CD4-positive, alpha-beta T cell (primary cell): ENCODE measurements at regions of chr4 and their contacts with region 1.

Region 1: DNA sequence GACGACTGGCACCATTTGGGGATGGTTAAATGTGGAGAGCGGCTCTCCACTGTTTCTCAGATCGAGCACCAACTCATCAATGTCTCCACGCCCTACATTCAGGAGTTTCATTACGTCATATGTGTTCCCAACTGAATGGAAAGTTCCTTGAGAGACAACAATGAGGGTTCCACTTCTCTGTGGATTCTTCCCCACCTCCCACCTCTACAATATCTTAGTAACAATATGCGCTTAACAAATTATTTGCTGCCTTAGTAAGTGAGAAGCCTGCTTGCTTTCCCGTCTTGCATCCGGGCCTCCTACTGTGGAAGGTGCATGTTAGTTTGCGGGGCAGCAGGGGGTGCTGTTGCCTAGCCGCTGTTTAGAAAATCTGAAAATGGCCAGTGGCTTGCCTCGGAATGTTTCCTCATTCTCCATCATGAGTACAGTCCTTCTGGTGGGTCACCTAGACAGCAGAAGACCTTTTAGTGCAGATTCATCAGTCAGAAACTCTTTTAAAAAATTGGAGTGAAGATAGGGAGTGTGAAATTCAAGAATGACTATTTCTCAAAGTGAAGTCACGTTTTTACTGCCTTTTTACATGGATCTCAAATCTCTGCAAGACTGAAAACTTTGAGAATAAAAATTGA is 55.7 kb downstream of the PHOX2B start:
- DNase-seq: peak in 6 of 14 experiments; percentile 2 to 41 (median 14)
- ATAC-seq: no peak
- H3K4me3 ChIP-seq: no peak overlapping the region
- H3K4me3 Mint-ChIP-seq: no peak overlapping the region
- H3K27ac ChIP-seq: no peak overlapping the region
- H3K27ac Mint-ChIP-seq: no peak overlapping the region
- H3K4me1 ChIP-seq: no peaks in the 10 kb centered on the region
- H3K4me1 Mint-ChIP-seq: no peaks in the 10 kb centered on the region
- H3K27me3 ChIP-seq: no peaks in the 10 kb centered on the region
- H3K27me3 Mint-ChIP-seq: peaks cover 16% of the 10 kb centered on the region
- CTCF ChIP-seq: no peak

Region 2: DNA sequence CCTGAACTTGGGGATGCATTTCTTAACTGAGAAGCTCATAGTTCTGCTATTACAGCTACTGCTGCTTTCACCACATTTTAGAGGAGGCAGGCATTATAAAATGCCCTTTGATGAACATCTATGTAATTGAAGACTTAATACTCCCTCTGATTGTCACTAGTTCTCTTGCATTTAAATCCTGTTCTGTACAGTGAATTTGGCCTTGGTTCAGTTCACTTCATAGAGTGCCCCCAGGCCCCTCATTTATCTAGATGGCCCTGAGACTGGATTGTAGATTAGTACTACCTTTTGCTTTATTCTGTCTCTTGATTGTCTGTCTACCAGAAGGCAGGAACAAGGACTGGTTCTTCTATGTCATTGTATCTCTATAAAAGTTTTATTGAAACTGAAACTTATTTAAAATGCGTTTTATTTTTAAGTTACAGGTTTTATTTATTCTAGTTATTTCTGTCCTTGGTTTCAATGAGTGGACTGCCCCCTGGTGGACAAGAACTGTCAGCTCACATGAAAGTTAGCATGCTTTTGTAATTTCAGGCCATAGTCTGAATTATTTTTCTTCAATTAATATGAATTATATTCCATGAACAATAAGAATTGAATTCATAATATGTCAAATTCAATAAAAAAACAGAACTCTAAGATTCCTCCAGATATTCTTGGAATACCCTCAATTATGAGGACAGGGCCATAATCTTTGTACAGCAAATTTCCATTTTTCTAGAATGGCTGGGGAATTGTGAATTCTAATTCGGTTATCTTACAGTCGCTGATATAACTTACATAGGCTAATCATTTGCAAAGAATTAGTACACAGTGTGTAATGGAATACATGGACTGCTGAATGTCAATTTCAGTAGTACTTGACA is 195.2 kb after region 1 on chr4:
- CTCF ChIA-PET with region 1: no interaction called
- POLR2A ChIA-PET with region 1: no interaction called
- intact Hi-C with region 1: loop called (anchors 5 kb)
- DNase-seq: peak in 7 of 14 experiments; percentile 15 to 65 (median 35)
- ATAC-seq: no peak
- H3K4me3 ChIP-seq: no peak overlapping the region
- H3K4me3 Mint-ChIP-seq: no peak overlapping the region
- H3K27ac ChIP-seq: no peak overlapping the region
- H3K27ac Mint-ChIP-seq: no peak overlapping the region
- H3K4me1 ChIP-seq: peaks cover 1% of the 10 kb centered on the region
- H3K4me1 Mint-ChIP-seq: peaks cover 2% of the 10 kb centered on the region
- H3K27me3 ChIP-seq: peaks cover 6 to 31% of the 10 kb centered on the region in 2 experiments
- H3K27me3 Mint-ChIP-seq: peaks cover 77% of the 10 kb centered on the region
- CTCF ChIP-seq: peak; percentile 90

Region 3: DNA sequence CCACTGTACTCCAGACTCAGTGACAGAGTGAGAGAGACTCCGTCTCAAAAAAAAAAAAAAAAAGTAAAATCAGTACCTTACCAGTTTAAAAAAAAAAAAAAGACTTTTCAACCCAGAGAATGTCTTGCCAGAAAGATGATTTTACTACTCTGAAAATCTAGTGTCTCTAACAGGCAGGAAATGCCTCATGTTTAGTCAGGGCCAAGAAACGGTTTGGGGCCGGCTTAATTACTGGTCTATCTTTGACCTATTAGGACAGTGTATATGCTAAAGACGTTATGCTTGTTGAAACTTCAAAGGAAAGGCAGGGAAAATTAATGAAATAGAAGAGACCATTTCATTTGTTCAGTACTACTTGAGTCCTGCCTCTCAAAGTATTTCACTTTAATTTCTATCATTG is 449.8 kb after region 1 on chr4:
- CTCF ChIA-PET with region 1: no interaction called
- POLR2A ChIA-PET with region 1: no interaction called
- intact Hi-C with region 1: no loop called
- DNase-seq: no peak
- ATAC-seq: no peak
- H3K4me3 ChIP-seq: no peak overlapping the region
- H3K4me3 Mint-ChIP-seq: no peak overlapping the region
- H3K27ac ChIP-seq: no peak overlapping the region
- H3K27ac Mint-ChIP-seq: no peak overlapping the region
- H3K4me1 ChIP-seq: no peaks in the 10 kb centered on the region
- H3K4me1 Mint-ChIP-seq: no peaks in the 10 kb centered on the region
- H3K27me3 ChIP-seq: peaks cover 0 to 2% of the 10 kb centered on the region in 2 experiments
- H3K27me3 Mint-ChIP-seq: peaks cover 55% of the 10 kb centered on the region
- CTCF ChIP-seq: no peak